CD8-positive, alpha-beta T cell (primary cell): ENCODE measurements at regions of chr12 and their contacts with region 1.

Region 1: DNA sequence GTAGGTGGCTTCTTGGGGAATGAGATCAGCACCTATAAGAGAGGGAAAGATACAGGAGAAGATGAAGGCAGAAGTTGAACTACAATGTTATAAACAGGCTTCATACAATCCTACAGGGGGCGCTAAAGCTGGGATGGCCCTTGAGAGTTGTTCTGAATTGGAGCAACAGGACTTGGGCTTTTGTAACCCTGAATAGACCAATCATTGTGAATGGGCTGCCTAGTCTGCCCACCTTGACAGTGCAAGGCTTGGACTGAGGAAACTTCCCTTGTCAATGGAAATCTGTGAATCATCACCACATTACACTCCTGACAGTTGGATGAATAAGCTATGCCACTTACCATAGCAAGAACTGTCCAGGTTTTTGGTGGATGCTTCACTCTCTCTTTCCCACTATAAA is 306.1 kb downstream of the KCNC2 start:
- DNase-seq: no peak
- ATAC-seq: no peak
- H3K4me3 ChIP-seq: no peak overlapping the region
- H3K4me3 Mint-ChIP-seq: no peak overlapping the region
- H3K27ac ChIP-seq: no peak overlapping the region
- H3K27ac Mint-ChIP-seq: no peak overlapping the region
- H3K4me1 ChIP-seq: peaks cover 13% of the 10 kb centered on the region
- H3K4me1 Mint-ChIP-seq: peaks cover 22% of the 10 kb centered on the region
- H3K27me3 ChIP-seq: no peaks in the 10 kb centered on the region
- H3K27me3 Mint-ChIP-seq: no peaks in the 10 kb centered on the region
- CTCF ChIP-seq: no peak

Region 2: DNA sequence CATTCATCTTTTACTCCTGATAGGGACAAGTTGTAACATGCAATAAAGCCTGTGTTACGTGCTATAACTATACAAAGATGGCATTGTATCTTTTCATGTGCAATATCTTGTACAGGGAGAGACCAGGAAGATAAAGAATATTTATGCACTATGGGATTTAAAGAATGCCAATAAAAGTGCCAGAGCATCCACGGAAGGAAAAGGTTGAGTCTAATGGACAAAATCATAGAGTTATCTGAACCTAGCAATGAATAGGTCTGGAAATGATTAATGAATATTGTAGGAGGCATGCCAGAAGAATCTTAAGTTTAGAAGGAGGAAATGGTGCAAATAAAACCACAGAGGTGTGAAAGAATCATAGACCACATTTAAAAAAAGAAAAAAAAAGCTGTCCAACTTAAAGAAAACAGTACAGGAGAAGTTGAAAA is 42.3 kb after region 1 on chr12:
- CTCF ChIA-PET with region 1: no interaction called
- POLR2A ChIA-PET with region 1: no interaction called
- intact Hi-C with region 1: loop called in 1 of 2 experiments (anchors 5 kb)
- DNase-seq: peak in 2 of 9 experiments; percentile 17 to 42
- ATAC-seq: peak; percentile 26
- H3K4me3 ChIP-seq: no peak overlapping the region
- H3K4me3 Mint-ChIP-seq: peak overlapping the region; percentile 53
- H3K27ac ChIP-seq: no peak overlapping the region
- H3K27ac Mint-ChIP-seq: peak overlapping the region; percentile 12
- H3K4me1 ChIP-seq: peaks cover 15% of the 10 kb centered on the region
- H3K4me1 Mint-ChIP-seq: peaks cover 27% of the 10 kb centered on the region
- H3K27me3 ChIP-seq: no peaks in the 10 kb centered on the region
- H3K27me3 Mint-ChIP-seq: no peaks in the 10 kb centered on the region
- CTCF ChIP-seq: no peak